Activated CD4-positive, alpha-beta T cell treated with anti-CD3 and anti-CD28 coated beads, Interleukin-2, amount 10 ng/mL, durations not matched to agents 24 days and 14 days (primary cell): ENCODE measurements at regions of chr2 and their contacts with region 1.

Region 1: GRCh38 chr2:68774569-68775271 is 40.1 kb downstream of the ARHGAP25 start:
- DNase-seq: peak; percentile 89
- H3K4me3 Mint-ChIP-seq: peak overlapping the region; percentile 88
- H3K27ac Mint-ChIP-seq: peak overlapping the region; percentile 96
- H3K4me1 Mint-ChIP-seq: peaks cover 81% of the 10 kb centered on the region
- H3K27me3 Mint-ChIP-seq: no peaks in the 10 kb centered on the region

Region 2: GRCh38 chr2:68796294-68796905 is 21.7 kb after region 1 on chr2:
- intact Hi-C with region 1: loop called (anchors 2 kb)
- DNase-seq: no peak
- H3K4me3 Mint-ChIP-seq: peak overlapping the region; percentile 44
- H3K27ac Mint-ChIP-seq: peak overlapping the region; percentile 74
- H3K4me1 Mint-ChIP-seq: peaks cover 54% of the 10 kb centered on the region
- H3K27me3 Mint-ChIP-seq: no peaks in the 10 kb centered on the region